MCF 10A (cell line): ENCODE measurements at regions of chr5 and their contacts with region 1.

Region 1: DNA sequence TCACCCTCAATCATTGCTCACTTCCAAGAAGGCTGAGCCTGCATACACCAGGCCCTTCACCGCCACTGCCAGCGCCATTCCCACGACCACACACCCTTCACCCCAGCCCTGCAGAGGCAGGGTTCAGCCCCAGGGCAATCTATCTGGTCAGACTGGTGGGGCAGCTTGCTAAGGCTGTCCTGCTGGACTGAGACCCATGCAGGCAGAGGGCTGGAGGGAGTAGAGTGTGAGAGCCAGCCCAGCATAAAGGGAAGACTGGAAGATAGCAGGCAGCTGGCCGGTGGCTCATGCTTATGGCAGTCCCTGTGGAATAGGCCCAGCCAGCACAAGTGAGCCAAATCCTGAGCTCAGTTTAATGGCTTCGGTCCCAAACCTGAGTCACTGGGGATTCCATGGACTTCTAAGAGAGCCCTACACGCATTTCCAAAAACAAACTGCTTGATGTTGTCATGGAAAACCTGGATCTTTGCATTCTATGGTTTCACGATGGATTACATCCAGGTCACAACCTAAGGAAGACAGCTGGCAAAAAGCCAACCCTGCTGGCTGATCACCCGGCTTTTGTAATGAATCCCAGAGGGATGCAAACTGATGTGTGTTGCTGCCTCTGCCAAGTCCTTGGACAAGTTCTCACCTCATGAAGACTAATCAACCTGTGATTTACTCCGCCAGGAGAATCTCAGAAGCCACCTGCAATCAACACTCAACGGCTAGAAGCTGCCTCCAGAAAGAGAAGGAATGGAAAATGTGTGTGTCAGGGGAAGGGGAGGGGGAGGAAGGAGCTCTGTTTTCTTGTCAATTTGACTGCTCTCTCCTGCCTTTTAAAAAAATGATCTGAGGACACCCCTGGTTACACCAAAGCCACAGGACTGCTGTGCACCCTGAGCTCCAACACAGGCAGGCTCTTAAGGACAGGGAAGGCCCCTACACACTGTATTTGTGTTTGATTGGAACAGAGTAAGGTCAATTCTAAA is 143.6 kb downstream of the LHFPL2 start:
- DNase-seq: peak; percentile 98
- H3K4me3 Mint-ChIP-seq: peak overlapping the region; percentile 3
- H3K27ac Mint-ChIP-seq: peak overlapping the region; percentile 96
- H3K4me1 Mint-ChIP-seq: peaks cover 41% of the 10 kb centered on the region
- H3K27me3 Mint-ChIP-seq: no peaks in the 10 kb centered on the region
- CTCF ChIP-seq: no peak

Region 2: DNA sequence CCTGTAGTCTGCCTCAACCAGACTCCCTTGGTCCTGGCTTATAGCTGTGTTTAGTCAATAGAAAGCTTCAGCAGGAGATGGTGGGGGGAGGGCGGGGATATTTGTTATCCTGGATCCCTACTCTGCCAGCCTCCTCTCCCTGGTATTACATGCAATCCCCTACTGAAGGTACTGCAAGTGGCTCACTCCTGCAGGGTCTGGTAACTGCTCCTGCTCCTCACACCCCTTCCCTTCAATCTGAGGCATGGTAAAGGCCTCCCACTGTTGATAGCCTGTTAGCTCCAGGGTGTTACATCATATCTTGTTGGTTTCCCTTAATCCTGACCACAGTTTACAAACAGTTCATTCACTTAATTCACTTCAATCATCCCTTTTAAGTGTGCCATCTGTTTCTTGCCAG is 348.0 kb before region 1 on chr5:
- CTCF ChIA-PET with region 1: no interaction called
- POLR2A ChIA-PET with region 1: no interaction called
- intact Hi-C with region 1: no loop called
- DNase-seq: no peak
- H3K4me3 Mint-ChIP-seq: no peak overlapping the region
- H3K27ac Mint-ChIP-seq: no peak overlapping the region
- H3K4me1 Mint-ChIP-seq: no peaks in the 10 kb centered on the region
- H3K27me3 Mint-ChIP-seq: no peaks in the 10 kb centered on the region
- CTCF ChIP-seq: no peak

Region 3: GRCh38 chr5:78518365-78519197 is 13.6 kb after region 1 on chr5:
- CTCF ChIA-PET with region 1: interaction called, 3 read pairs
- POLR2A ChIA-PET with region 1: interaction called, 12 read pairs
- intact Hi-C with region 1: no loop called
- DNase-seq: peak; percentile 74
- H3K4me3 Mint-ChIP-seq: peak overlapping the region; percentile 22
- H3K27ac Mint-ChIP-seq: peak overlapping the region; percentile 94
- H3K4me1 Mint-ChIP-seq: peaks cover 57% of the 10 kb centered on the region
- H3K27me3 Mint-ChIP-seq: no peaks in the 10 kb centered on the region
- CTCF ChIP-seq: no peak